ENCODE measurements at regions of chr5 and their contacts with region 1.

Region 1: DNA sequence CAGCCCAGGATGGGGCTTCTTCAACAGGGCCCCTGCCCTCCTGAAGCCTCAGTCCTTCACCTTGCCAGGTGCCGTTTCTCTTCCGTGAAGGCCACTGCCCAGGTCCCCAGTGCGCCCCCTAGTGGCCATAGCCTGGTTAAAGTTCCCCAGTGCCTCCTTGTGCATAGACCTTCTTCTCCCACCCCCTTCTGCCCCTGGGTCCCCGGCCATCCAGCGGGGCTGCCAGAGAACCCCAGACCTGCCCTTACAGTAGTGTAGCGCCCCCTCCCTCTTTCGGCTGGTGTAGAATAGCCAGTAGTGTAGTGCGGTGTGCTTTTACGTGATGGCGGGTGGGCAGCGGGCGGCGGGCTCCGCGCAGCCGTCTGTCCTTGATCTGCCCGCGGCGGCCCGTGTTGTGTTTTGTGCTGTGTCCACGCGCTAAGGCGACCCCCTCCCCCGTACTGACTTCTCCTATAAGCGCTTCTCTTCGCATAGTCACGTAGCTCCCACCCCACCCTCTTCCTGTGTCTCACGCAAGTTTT is 23.6 kb downstream of the PCDHGC5 start:
- DNase-seq: peak; percentile 69
- H3K4me3 ChIP-seq: peak overlapping the region in 1 of 2 experiments; percentile 33; a peak in 1 of 4 replicates
- H3K27ac ChIP-seq: peak overlapping the region; percentile 99 to 100
- H3K4me1 ChIP-seq: peaks cover 71 to 77% of the 10 kb centered on the region in 2 experiments
- H3K27me3 ChIP-seq: no peaks in the 10 kb centered on the region
- CTCF ChIP-seq: peak; percentile 88
- EP300 ChIP-seq: no peak
- RAD21 ChIP-seq: peak; percentile 18; the same call in 1 of the 2 replicates

Region 2: GRCh38 chr5:141412854-141413539 is 99.5 kb before region 1 on chr5 and contains the start of gene PCDHGA10:
- CTCF ChIA-PET with region 1: interaction called, 10 read pairs
- POLR2A ChIA-PET with region 1: interaction called, 4 read pairs
- DNase-seq: no peak
- H3K4me3 ChIP-seq: peak within 1 kb of the TSS; percentile 22 to 28; a peak in 3 of 4 replicates
- H3K27ac ChIP-seq: no peak within 1 kb of the TSS
- H3K4me1 ChIP-seq: no peaks in the 10 kb centered on the region
- H3K27me3 ChIP-seq: no peaks in the 10 kb centered on the region
- CTCF ChIP-seq: peak; percentile 54
- EP300 ChIP-seq: no peak
- RAD21 ChIP-seq: peak; percentile 47
- polyA plus RNA-seq, gene PCDHGA10: 1.6 and 2.0 TPM in 2 replicates

Region 3: GRCh38 chr5:141475625-141476131 is 36.8 kb before region 1 on chr5 and contains the start of gene PCDHGC3:
- CTCF ChIA-PET with region 1: interaction called, 113 read pairs
- POLR2A ChIA-PET with region 1: interaction called, 13 read pairs
- DNase-seq: peak; percentile 90
- H3K4me3 ChIP-seq: peak within 1 kb of the TSS; percentile 82 to 85
- H3K27ac ChIP-seq: peak within 1 kb of the TSS; percentile 92 to 94
- H3K4me1 ChIP-seq: peaks cover 6 to 34% of the 10 kb centered on the region in 2 experiments; a peak in 3 of 4 replicates
- H3K27me3 ChIP-seq: no peaks in the 10 kb centered on the region
- CTCF ChIP-seq: peak; percentile 45
- EP300 ChIP-seq: peak in 1 of 2 experiments; percentile 38; a peak in 1 of 4 replicates
- RAD21 ChIP-seq: peak; percentile 85
- polyA plus RNA-seq, gene PCDHGC3: 55.8 and 97.0 TPM in 2 replicates

Region 4: GRCh38 chr5:141484641-141485311 is 27.7 kb before region 1 on chr5 and contains the start of gene PCDHGC4:
- CTCF ChIA-PET with region 1: interaction called, 75 read pairs
- POLR2A ChIA-PET with region 1: interaction called, 6 read pairs
- DNase-seq: peak; percentile 91
- H3K4me3 ChIP-seq: peak within 1 kb of the TSS in 1 of 2 experiments; percentile 42; a peak in 2 of 4 replicates
- H3K27ac ChIP-seq: peak within 1 kb of the TSS; percentile 11 to 91; a peak in 3 of 4 replicates
- H3K4me1 ChIP-seq: peaks cover 30 to 44% of the 10 kb centered on the region in 2 experiments
- H3K27me3 ChIP-seq: no peaks in the 10 kb centered on the region
- CTCF ChIP-seq: no peak
- EP300 ChIP-seq: no peak
- RAD21 ChIP-seq: 0 out of 2 replicates have a peak, but pooled peaks have one; percentile 2
- polyA plus RNA-seq, gene PCDHGC4: 0.53 and 0.78 TPM in 2 replicates

Region 5: GRCh38 chr5:141664732-141665461 is 152.4 kb after region 1 on chr5:
- CTCF ChIA-PET with region 1: no interaction called
- POLR2A ChIA-PET with region 1: no interaction called
- DNase-seq: peak; percentile 90
- H3K4me3 ChIP-seq: no peak overlapping the region; a peak in 1 of 4 replicates
- H3K27ac ChIP-seq: no peak overlapping the region
- H3K4me1 ChIP-seq: no peaks in the 10 kb centered on the region; a peak in 1 of 4 replicates
- H3K27me3 ChIP-seq: no peaks in the 10 kb centered on the region
- CTCF ChIP-seq: peak; percentile 89
- EP300 ChIP-seq: no peak
- RAD21 ChIP-seq: peak; percentile 83